A673 (cell line): ENCODE measurements at regions of chr6 and their contacts with region 1.

Region 1: GRCh38 chr6:116444092-116444491 is 17.1 kb upstream of the CALHM6 start:
- DNase-seq: peak; percentile 48
- H3K4me3 ChIP-seq: no peak overlapping the region
- H3K27ac ChIP-seq: no peak overlapping the region
- H3K4me1 ChIP-seq: peaks cover 7% of the 10 kb centered on the region
- H3K27me3 ChIP-seq: no peaks in the 10 kb centered on the region
- CTCF ChIP-seq: peak; percentile 66

Region 2: DNA sequence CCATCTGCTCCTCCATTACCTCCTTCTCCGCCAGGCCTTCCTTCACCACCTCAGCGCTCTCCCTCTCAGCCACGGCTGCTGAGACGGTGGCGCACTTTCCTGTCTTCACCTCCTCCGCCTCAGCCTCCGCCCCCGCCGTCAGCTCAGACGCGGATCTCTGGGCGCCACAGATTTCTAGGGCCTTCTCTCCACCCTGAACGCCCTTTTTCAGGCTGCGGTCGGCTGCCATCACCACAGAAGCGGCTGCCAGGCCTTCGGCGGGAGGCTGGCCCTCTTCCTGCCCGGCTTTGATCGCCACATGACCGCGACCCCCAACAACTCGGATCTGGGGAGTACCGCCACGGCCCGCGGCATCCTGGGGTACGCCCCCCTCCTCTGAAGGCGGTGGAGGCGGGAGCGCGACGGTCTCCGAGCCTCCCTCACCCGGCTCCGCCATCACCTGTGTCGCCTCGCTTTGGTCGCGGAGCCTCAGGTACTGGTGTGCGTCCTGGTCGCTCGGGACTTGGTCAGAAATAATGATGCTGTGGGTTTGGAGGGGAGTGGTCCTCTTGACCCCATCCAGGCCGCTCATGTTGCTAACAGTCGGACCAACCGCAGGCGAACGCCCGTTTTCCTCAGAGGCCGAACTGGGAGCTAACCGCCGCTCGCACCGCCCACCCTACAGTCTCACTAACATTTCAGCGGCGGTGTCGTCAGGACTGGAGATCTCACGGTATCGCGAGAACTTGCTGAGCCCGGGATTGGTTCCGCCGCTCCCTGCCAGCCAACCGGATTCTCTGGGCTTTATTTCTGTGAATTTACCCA is 164.6 kb before region 1 on chr6 and contains the start of gene TSPYL1:
- CTCF ChIA-PET with region 1: no interaction called
- POLR2A ChIA-PET with region 1: no interaction called
- intact Hi-C with region 1: loop called (anchors 10 kb)
- DNase-seq: peak; percentile 97
- H3K4me3 ChIP-seq: peak within 1 kb of the TSS; percentile 94
- H3K27ac ChIP-seq: peak within 1 kb of the TSS; percentile 92
- H3K4me1 ChIP-seq: peaks cover 33% of the 10 kb centered on the region
- H3K27me3 ChIP-seq: no peaks in the 10 kb centered on the region
- CTCF ChIP-seq: 0 out of 2 replicates have a peak, but pooled peaks have one; percentile 18
- total RNA-seq, gene TSPYL1: 39.7 and 41.1 TPM in 2 replicates

Region 3: DNA sequence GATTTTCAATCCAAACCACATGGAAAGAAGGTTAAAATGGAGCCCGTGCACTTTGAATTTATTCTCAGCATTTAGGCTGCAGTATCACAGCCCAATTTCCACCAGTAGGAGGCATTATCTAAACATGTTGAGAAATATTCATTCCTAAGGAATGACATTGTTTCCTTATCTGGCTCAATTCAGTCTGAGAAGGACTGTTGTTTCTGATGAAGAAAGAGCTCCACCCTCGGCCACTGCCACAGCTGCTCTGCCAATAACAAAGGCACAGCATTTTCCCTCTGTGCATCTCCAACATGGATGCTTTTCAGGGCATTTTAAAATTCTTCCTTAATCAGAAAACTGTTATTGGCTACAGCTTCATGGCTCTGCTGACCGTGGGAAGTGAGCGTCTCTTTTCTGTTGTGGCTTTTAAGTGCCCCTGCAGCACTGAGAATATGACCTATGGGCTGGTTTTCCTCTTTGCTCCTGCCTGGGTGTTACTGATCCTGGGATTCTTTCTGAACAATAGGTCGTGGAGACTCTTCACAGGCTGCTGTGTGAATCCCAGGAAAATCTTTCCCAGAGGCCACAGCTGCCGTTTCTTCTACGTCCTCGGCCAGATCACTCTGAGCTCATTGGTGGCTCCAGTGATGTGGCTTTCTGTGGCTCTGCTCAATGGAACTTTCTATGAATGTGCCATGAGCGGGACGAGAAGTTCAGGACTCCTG is 67.5 kb after region 1 on chr6 and contains the start of gene CALHM5:
- CTCF ChIA-PET with region 1: no interaction called
- POLR2A ChIA-PET with region 1: no interaction called
- intact Hi-C with region 1: loop called (anchors 5 kb)
- DNase-seq: peak; percentile 84
- H3K4me3 ChIP-seq: no peak within 1 kb of the TSS
- H3K27ac ChIP-seq: peak within 1 kb of the TSS; percentile 20
- H3K4me1 ChIP-seq: peaks cover 23% of the 10 kb centered on the region
- H3K27me3 ChIP-seq: no peaks in the 10 kb centered on the region
- CTCF ChIP-seq: peak; percentile 73
- total RNA-seq, gene CALHM5: 0.26 TPM in 2 replicates

Region 4: DNA sequence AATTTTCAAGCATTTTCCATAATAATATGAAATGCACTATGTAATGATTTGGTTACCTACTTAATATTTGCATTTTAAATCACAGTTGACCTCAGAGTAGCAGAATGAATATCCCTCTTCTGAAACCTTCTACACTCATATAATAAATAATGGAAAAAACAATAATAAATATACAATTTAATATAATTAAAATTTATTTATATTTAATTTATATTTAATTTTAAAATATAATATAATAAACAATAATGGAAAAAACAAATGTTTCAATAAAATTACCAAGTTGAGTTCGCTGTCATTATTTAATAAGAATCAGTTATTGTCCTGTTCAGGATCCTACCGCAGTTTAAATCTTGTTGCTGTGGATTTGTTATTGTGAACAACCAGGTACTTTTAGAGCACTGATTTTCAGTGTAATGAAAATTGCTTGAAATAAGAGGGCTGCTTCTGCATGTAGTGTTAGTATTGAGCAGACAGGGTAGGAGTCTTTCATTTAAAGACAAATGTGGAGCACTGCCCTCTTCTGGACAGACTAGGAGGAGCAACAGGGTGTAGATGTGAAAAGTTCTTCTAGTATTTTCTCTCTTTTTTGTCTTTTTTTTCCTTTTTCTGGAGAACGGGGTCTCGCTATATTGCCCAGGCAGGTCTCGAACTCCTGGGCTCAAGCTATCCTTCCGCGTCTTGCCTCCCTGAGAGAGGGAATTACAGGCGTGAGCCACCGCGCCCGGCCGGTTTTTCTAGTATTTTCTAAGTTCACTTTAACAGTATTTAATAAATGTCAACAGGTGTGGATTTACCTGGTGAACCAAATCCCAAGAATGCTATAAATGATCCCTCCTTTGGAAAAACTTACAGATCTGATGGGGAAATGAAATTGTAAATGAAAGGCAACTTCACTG is 87.8 kb after region 1 on chr6:
- CTCF ChIA-PET with region 1: interaction called, 5 read pairs
- POLR2A ChIA-PET with region 1: interaction called, 6 read pairs
- intact Hi-C with region 1: loop called (anchors 1 kb)
- DNase-seq: peak; percentile 75
- H3K4me3 ChIP-seq: no peak overlapping the region
- H3K27ac ChIP-seq: no peak overlapping the region
- H3K4me1 ChIP-seq: peaks cover 3% of the 10 kb centered on the region
- H3K27me3 ChIP-seq: no peaks in the 10 kb centered on the region
- CTCF ChIP-seq: peak; percentile 81